PC-9 (cell line): ENCODE measurements at regions of chr6 and their contacts with region 1.

Region 1: DNA sequence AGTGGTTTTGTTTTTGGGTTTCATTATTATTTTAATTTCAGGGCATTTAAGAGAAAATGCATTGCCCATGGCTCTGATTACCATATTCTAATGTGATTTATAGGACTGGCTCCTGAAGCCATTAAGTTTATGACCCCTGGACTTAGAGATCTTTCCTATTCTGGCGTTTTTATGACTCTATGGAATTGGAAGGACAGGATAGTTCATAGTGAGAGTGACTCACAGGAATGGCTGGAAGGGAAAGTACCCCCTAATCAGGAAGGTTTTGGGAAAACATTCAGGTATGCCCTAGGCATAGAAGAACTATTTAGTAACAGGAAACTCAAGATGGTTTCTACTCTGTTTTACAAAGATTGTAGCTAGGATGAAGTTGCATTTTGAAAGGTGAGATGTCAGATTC is 108.6 kb upstream of the SLC2A12 start:
- DNase-seq: peak in 1 of 2 experiments; percentile 77
- H3K4me3 ChIP-seq: no peak overlapping the region
- H3K27ac ChIP-seq: peak overlapping the region; percentile 59
- H3K4me1 ChIP-seq: peaks cover 20% of the 10 kb centered on the region
- H3K27me3 ChIP-seq: no peaks in the 10 kb centered on the region
- CTCF ChIP-seq: no peak

Region 2: DNA sequence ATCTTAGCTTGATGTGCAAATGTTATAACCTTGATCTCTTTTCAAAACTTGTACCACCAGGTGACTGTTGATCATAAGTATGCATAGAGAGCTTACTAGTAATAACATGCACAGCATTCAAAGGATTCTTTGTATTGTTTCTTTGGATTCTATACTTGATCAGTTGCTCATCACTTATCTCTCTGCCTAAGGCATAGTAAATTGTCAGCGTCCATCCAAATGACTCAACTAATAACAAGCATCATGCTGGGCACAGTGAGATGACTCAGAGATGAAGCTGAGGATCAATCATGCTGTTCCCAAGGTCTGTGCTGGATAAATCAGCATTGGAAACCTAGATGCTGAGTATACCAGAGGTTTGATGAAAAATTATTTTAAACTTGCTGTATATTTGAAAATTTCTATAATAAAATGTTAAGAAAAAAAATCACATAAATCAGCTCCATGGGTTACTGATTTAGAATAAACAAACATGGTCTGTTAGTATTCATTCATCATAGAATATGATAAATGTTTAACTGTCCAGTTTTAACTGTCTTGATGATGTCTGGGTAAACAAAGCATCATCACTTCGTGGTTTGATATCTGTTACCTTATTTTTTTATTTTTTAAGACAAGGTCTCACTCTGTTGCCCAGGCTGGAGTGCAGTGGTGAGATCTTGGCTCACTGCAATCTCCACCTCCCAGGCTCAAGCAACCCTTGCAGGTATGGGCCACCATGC is 202.4 kb after region 1 on chr6:
- CTCF ChIA-PET with region 1: no interaction called
- POLR2A ChIA-PET with region 1: no interaction called
- intact Hi-C with region 1: no loop called
- DNase-seq: peak in 1 of 2 experiments; percentile 84
- H3K4me3 ChIP-seq: no peak overlapping the region
- H3K27ac ChIP-seq: no peak overlapping the region
- H3K4me1 ChIP-seq: peaks cover 16% of the 10 kb centered on the region
- H3K27me3 ChIP-seq: no peaks in the 10 kb centered on the region
- CTCF ChIP-seq: no peak

Region 3: DNA sequence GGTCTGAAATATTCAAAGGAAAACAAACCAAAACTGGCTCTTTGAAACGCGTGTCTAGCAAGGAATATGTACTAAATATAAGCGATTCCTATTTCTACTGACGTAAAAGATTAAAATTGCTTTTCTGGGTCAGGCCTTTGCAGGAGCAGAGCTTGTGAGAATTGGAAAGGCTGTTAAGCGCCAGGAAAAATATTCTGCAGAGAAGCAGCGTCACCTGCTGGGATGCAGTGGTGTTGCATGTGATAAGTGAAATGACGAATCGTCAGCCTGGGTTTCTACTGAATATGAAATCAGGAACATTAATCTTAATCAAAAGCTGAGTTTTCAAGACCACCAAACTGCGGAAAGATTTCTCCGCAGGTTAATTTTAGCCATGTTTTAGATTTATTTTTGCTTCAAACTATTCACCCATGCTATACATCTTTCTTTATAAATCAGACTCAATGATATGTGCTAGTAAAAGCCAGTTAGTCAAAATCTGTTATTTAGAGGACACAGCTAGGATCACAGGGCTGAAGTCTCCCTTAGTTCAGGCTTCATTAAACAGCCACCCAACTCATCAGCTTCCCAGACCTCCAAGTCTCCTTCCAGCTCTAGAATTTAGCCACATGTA is 721.5 kb after region 1 on chr6:
- CTCF ChIA-PET with region 1: no interaction called
- POLR2A ChIA-PET with region 1: no interaction called
- intact Hi-C with region 1: loop called (anchors 1 kb)
- DNase-seq: peak in 1 of 2 experiments; percentile 59
- H3K4me3 ChIP-seq: no peak overlapping the region
- H3K27ac ChIP-seq: no peak overlapping the region
- H3K4me1 ChIP-seq: no peaks in the 10 kb centered on the region
- H3K27me3 ChIP-seq: no peaks in the 10 kb centered on the region
- CTCF ChIP-seq: peak; percentile 100